ENCODE measurements at regions of chr2 and their contacts with region 1.

Region 1: GRCh38 chr2:224927646-224928173 is 114.6 kb downstream of the DOCK10 start:
- DNase-seq: peak; percentile 64
- H3K4me3 Mint-ChIP-seq: peak overlapping the region; percentile 56
- H3K27ac Mint-ChIP-seq: peak overlapping the region; percentile 99
- H3K4me1 Mint-ChIP-seq: peaks cover 99% of the 10 kb centered on the region
- H3K27me3 Mint-ChIP-seq: no peaks in the 10 kb centered on the region

Region 2: GRCh38 chr2:224885836-224886547 is 41.7 kb before region 1 on chr2:
- intact Hi-C with region 1: loop called (anchors 1 kb)
- DNase-seq: no peak
- H3K4me3 Mint-ChIP-seq: no peak overlapping the region
- H3K27ac Mint-ChIP-seq: peak overlapping the region; percentile 67
- H3K4me1 Mint-ChIP-seq: peaks cover 77% of the 10 kb centered on the region
- H3K27me3 Mint-ChIP-seq: no peaks in the 10 kb centered on the region

Region 3: GRCh38 chr2:224909885-224910573 is 17.7 kb before region 1 on chr2:
- intact Hi-C with region 1: loop called (anchors 2 kb)
- DNase-seq: no peak
- H3K4me3 Mint-ChIP-seq: no peak overlapping the region
- H3K27ac Mint-ChIP-seq: peak overlapping the region; percentile 60
- H3K4me1 Mint-ChIP-seq: peaks cover 54% of the 10 kb centered on the region
- H3K27me3 Mint-ChIP-seq: no peaks in the 10 kb centered on the region

Region 4: GRCh38 chr2:224952936-224953657 is 25.4 kb after region 1 on chr2:
- intact Hi-C with region 1: loop called (anchors 1 kb)
- DNase-seq: peak; percentile 34
- H3K4me3 Mint-ChIP-seq: peak overlapping the region; percentile 62
- H3K27ac Mint-ChIP-seq: peak overlapping the region; percentile 87
- H3K4me1 Mint-ChIP-seq: peaks cover 92% of the 10 kb centered on the region
- H3K27me3 Mint-ChIP-seq: no peaks in the 10 kb centered on the region

Region 5: GRCh38 chr2:225002039-225002655 is 74.4 kb after region 1 on chr2:
- intact Hi-C with region 1: loop called (anchors 1 kb)
- DNase-seq: peak; percentile 42
- H3K4me3 Mint-ChIP-seq: no peak overlapping the region
- H3K27ac Mint-ChIP-seq: peak overlapping the region; percentile 80
- H3K4me1 Mint-ChIP-seq: peaks cover 87% of the 10 kb centered on the region
- H3K27me3 Mint-ChIP-seq: no peaks in the 10 kb centered on the region

Region 6: GRCh38 chr2:225025917-225026571 is 98.3 kb after region 1 on chr2:
- intact Hi-C with region 1: loop called (anchors 1 kb)
- DNase-seq: no peak
- H3K4me3 Mint-ChIP-seq: peak overlapping the region; percentile 3
- H3K27ac Mint-ChIP-seq: peak overlapping the region; percentile 64
- H3K4me1 Mint-ChIP-seq: peaks cover 67% of the 10 kb centered on the region
- H3K27me3 Mint-ChIP-seq: no peaks in the 10 kb centered on the region